Activated T-helper 1 cell treated with anti-CD3 and anti-CD28 coated beads, Interleukin-12 subunit alpha, Interleukin-12 subunit beta, Interleukin-2, Interleukin-4 antibody, amounts not matched to agents 30 ng/mL and 10 ng/mL and 1 ng/mL, durations not matched to agents 14 hours and 24 hours and 36 hours (primary cell): ENCODE measurements at regions of chr1 and their contacts with region 1.

Region 1: GRCh38 chr1:24964811-24965570 is 34.9 kb upstream of the RUNX3 start:
- DNase-seq: peak; percentile 93
- H3K4me3 Mint-ChIP-seq: peak overlapping the region; percentile 93
- H3K27ac Mint-ChIP-seq: peak overlapping the region; percentile 99
- H3K4me1 Mint-ChIP-seq: peaks cover 78% of the 10 kb centered on the region
- H3K27me3 Mint-ChIP-seq: no peaks in the 10 kb centered on the region

Region 2: GRCh38 chr1:23559136-23559984 is 1405.6 kb before region 1 on chr1 and contains the start of gene ID3:
- intact Hi-C with region 1: loop called (anchors 2 kb)
- DNase-seq: peak; percentile 95
- H3K4me3 Mint-ChIP-seq: peak within 1 kb of the TSS; percentile 90
- H3K27ac Mint-ChIP-seq: peak within 1 kb of the TSS; percentile 66
- H3K4me1 Mint-ChIP-seq: peaks cover 67% of the 10 kb centered on the region
- H3K27me3 Mint-ChIP-seq: peaks cover 36% of the 10 kb centered on the region
- total RNA-seq, gene ID3: 20.8 and 22.9 TPM in 2 replicates

Region 3: GRCh38 chr1:24981631-24982005 is 16.6 kb after region 1 on chr1:
- intact Hi-C with region 1: loop called (anchors 2 kb)
- DNase-seq: no peak
- H3K4me3 Mint-ChIP-seq: peak overlapping the region; percentile 52
- H3K27ac Mint-ChIP-seq: peak overlapping the region; percentile 84
- H3K4me1 Mint-ChIP-seq: peaks cover 91% of the 10 kb centered on the region
- H3K27me3 Mint-ChIP-seq: no peaks in the 10 kb centered on the region

Region 4: DNA sequence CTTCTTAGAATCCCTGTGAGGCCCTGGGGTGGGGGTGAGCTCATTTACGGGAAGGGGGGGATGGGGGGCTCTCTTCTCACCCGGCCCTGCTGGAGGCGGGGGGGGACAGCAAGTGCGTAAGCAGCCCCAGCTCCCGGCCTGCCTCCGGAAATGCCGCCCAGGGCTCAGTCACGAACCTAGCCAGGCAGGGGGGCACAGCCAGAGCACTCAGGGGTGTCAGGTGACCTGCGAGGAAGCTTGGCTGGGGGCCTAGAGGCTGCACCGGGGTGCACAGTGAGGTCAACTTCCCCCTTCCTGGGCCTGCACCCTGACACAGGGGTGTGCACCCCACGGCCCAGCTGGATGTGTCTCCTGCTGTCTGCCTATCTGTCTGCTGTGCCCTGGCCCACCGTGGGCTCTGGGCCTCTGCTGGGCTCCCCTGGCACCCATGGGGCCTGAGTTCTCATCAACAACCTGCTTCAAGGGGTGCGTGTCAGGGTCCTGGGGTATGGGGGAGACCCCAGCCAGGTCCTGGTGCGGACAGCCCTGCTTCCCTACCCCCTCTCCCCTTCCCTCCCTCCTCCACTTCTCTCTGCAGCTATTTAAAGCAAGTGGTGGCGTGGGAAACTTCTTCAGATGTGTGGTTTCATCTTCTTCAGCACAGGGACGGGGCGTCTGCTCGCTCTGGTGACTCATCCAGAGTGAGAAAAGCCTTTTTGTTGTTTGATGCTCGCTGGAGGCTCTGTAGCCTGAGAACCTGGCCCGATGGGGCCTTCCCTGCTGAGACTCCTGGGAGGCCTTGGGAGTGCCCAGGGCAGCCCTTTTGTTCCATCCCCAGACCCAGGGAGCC is 57.6 kb after region 1 on chr1:
- intact Hi-C with region 1: loop called (anchors 1 kb)
- DNase-seq: peak; percentile 88
- H3K4me3 Mint-ChIP-seq: peak overlapping the region; percentile 74
- H3K27ac Mint-ChIP-seq: peak overlapping the region; percentile 97
- H3K4me1 Mint-ChIP-seq: peaks cover 93% of the 10 kb centered on the region
- H3K27me3 Mint-ChIP-seq: no peaks in the 10 kb centered on the region

Region 5: GRCh38 chr1:25037174-25038074 is 72.4 kb after region 1 on chr1:
- intact Hi-C with region 1: loop called (anchors 1 kb)
- DNase-seq: peak; percentile 50
- H3K4me3 Mint-ChIP-seq: no peak overlapping the region
- H3K27ac Mint-ChIP-seq: peak overlapping the region; percentile 4
- H3K4me1 Mint-ChIP-seq: peaks cover 32% of the 10 kb centered on the region
- H3K27me3 Mint-ChIP-seq: peaks cover 7% of the 10 kb centered on the region

Region 6: DNA sequence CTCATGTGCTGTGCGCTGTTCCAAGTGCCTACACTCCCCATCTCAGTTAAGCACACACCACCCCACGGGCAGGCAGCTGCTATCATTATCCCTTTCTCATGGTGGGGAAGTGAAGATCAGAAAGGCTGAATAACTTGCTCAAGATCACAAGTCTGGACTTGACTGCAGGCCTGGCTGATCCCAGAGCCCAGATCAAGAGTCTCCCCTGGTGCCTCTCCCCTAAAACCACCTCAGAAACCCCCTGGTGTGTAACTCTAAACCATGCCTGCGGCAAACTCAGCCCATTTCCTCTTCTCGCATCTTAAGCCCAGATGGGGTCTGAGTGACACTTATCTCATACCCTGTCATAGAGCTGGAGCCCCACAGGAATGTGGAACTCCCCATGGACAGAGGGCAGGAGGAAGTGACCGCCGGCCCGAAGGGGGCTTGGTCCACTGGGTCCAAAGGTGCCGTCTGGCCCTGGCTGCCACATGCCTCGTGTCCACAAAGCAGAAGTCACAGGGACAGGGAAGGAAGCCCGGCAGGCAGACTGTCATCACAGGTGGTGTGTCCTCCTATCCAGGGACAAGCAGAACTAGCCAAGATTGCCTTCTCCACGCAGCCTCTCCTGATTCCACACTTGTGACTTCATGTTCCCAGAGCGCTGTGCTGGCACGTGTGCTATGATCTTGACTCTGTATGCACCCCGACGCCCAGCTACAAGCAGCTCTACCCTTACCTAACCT is 175.2 kb after region 1 on chr1:
- intact Hi-C with region 1: no loop called
- DNase-seq: no peak
- H3K4me3 Mint-ChIP-seq: no peak overlapping the region
- H3K27ac Mint-ChIP-seq: no peak overlapping the region
- H3K4me1 Mint-ChIP-seq: no peaks in the 10 kb centered on the region
- H3K27me3 Mint-ChIP-seq: peaks cover 40% of the 10 kb centered on the region

Region 7: DNA sequence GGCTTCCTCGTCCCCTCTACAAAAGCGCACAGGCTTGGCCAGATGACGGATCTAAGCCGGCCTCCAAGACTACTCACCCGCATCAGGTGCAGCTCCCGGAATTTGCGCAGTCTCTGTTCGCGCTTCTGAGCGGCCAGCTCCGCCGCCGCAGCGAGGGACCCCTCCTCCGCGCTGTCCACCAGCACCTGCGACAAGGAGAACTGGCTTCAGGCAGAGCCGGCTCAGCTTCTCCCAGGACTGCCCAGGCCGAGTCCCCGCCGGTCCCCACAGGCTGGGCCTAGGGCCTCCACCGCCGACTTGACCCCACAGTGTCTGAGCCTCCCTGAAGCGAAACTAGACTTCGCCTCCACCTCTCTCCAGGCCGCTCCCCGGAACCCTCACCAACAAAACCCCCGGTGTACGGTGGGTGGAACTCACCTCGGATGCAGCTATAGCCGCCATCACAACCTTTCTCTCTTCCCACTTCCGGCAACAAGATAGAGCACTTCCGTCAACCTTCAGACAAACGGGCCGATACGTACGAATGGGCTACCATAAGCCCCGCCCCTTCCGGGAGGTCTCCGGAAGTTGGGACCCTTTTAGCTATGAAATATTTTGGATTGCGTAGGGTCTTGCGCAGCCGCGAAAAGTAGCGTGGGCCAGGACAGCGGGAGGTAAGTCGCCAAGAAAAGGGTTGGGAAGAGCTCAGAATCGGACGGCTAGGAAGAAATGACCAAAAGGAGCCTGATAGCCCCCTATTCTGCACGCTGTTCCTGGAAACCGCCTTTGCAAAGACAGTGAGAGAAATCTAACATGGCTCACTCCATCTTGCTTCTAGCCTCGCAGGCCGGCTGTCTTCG is 267.3 kb after region 1 on chr1 and contains the start of gene SYF2:
- intact Hi-C with region 1: no loop called
- DNase-seq: peak; percentile 83
- H3K4me3 Mint-ChIP-seq: no peak within 1 kb of the TSS
- H3K27ac Mint-ChIP-seq: no peak within 1 kb of the TSS
- H3K4me1 Mint-ChIP-seq: peaks cover 32% of the 10 kb centered on the region
- H3K27me3 Mint-ChIP-seq: no peaks in the 10 kb centered on the region
- total RNA-seq, gene SYF2: 40.7 and 41.4 TPM in 2 replicates